Sciatic nerve (tissue), 2 donors: ENCODE measurements at regions of chr11 and their contacts with region 1.

Region 1: GRCh38 chr11:67082035-67082791 is 25.6 kb downstream of the RHOD start:
- DNase-seq: no peak
- ATAC-seq: peak; percentile 25

Region 2: GRCh38 chr11:65150509-65151271 is 1931.5 kb before region 1 on chr11:
- intact Hi-C with region 1: no loop called
- DNase-seq: peak; percentile 84
- ATAC-seq: peak; percentile 92

Region 3: GRCh38 chr11:67178878-67179277 is 96.7 kb after region 1 on chr11:
- intact Hi-C with region 1: loop called (anchors 10 kb)
- DNase-seq: no peak
- ATAC-seq: no peak